Ovary (tissue), 10 donors: ENCODE measurements at regions of chr22 and their contacts with region 1.

Region 1: DNA sequence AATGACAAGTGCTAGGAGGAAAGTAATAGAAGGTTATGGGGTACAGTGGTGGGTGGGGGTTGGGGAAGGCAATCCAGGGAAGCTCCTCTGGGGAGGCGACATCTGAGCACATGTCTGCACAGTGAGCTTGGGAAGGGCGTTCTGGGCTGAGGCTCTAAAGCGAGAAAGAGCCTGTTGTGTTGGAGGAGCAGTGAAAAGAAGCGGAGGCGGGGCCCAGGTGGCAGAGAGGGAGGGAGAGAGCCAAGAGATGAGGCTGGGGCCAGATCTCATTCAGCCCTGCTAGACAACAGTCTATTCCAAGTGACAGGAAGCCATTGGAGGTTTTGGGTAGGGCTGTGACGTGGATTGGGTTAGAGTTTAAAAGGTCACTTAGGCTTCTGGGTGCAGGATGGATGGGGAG is 55.3 kb upstream of the PARVG start:
- DNase-seq: peak in 1 of 5 donors; percentile 17
- H3K4me3 ChIP-seq: no peak overlapping the region
- H3K27ac ChIP-seq: no peak overlapping the region
- H3K4me1 ChIP-seq: no peaks in the 10 kb centered on the region
- H3K27me3 ChIP-seq: no peaks in the 10 kb centered on the region
- CTCF ChIP-seq: no peak
- EP300 ChIP-seq: no peak
- POLR2A ChIP-seq: no peak

Region 2: DNA sequence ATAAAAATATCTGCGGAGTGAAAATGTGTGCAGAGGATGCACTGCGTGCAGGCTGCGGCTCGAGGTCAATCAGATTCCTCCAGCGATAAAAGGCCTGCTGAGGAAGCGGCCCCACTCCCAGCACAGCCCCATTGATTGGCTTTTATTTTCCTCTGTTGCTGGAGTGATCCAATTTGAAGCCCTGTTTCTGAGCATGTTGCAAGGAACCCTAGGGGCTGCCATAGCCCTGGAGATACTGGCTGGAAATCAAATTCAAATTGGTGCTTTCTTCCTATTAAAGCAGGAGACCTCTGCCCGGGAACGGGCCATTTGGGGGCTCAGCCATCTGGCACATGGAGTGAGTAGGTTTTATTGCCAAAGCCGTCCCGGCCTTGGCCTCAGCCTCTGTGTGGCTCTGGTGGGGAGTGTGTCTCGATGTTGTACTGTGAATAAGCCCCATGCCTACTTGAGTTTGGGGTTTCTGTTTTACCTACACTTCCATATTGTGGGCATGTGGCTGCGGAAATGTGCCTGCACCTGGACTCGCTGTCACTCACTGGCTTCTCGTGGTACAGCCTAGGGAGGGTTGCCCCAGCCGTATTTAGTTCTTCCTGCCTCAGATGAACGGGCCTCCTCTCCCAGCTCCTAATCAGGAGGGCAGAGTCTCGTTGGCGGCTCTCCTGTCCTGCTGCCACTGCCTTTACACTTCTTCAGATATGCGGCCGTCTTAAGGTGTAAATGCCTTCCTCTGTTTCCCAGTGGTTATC is 75.8 kb before region 1 on chr22:
- intact Hi-C with region 1: loop called in 1 of 4 experiments (anchors 2 kb)
- DNase-seq: peak; percentile 50 to 81 (median 56)
- H3K4me3 ChIP-seq: no peak overlapping the region
- H3K27ac ChIP-seq: no peak overlapping the region
- H3K4me1 ChIP-seq: peaks cover 7% of the 10 kb centered on the region
- H3K27me3 ChIP-seq: no peaks in the 10 kb centered on the region
- CTCF ChIP-seq: no peak
- EP300 ChIP-seq: no peak
- POLR2A ChIP-seq: no peak